ENCODE measurements at regions of chr2 and their contacts with region 1.

Region 1: DNA sequence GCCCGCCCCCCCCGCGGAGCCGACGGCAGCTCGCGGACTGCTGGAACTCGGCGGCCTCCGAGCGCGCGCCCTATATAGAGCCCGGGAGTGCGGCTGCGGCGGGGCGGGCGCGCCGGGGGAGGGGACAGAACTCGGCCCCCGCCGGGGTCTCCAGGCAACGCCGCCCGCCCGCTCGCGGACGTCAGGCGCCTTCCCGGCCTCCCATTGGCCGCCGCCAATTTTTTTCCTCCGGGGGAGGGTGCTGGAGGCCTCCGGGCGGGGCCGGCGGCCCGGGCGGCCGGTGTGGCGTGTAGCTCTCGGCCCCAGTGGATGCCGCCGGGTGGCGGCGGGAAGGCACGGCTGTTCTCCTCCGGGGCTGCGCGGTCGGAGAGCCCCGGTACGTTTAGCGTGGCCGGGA is at the start of gene ZFP36L2:
- DNase-seq: peak; percentile 98
- H3K4me3 ChIP-seq: peak within 1 kb of the TSS; percentile 73 to 96 (median 92)
- H3K27ac ChIP-seq: peak within 1 kb of the TSS; percentile 99 to 100 (median 100)
- H3K4me1 ChIP-seq: peaks cover 0 to 48% (median 36%) of the 10 kb centered on the region in 4 donors
- H3K27me3 ChIP-seq: no peaks in the 10 kb centered on the region
- CTCF ChIP-seq: no peak
- EP300 ChIP-seq: no peak
- POLR2A ChIP-seq: peak; percentile 97 to 98
- total RNA-seq, gene ZFP36L2: 59.8 to 115 (median 72.3) TPM

Region 2: GRCh38 chr2:42828487-42829425 is 397.8 kb before region 1 on chr2:
- intact Hi-C with region 1: loop called (anchors 2 kb)
- DNase-seq: peak; percentile 89
- H3K4me3 ChIP-seq: no peak overlapping the region
- H3K27ac ChIP-seq: peak overlapping the region in 2 of 4 donors; percentile 45 to 48
- H3K4me1 ChIP-seq: peaks cover 0 to 26% (median 22%) of the 10 kb centered on the region in 4 donors
- H3K27me3 ChIP-seq: no peaks in the 10 kb centered on the region
- CTCF ChIP-seq: peak; percentile 80 to 97 (median 94)
- EP300 ChIP-seq: no peak
- POLR2A ChIP-seq: no peak

Region 3: DNA sequence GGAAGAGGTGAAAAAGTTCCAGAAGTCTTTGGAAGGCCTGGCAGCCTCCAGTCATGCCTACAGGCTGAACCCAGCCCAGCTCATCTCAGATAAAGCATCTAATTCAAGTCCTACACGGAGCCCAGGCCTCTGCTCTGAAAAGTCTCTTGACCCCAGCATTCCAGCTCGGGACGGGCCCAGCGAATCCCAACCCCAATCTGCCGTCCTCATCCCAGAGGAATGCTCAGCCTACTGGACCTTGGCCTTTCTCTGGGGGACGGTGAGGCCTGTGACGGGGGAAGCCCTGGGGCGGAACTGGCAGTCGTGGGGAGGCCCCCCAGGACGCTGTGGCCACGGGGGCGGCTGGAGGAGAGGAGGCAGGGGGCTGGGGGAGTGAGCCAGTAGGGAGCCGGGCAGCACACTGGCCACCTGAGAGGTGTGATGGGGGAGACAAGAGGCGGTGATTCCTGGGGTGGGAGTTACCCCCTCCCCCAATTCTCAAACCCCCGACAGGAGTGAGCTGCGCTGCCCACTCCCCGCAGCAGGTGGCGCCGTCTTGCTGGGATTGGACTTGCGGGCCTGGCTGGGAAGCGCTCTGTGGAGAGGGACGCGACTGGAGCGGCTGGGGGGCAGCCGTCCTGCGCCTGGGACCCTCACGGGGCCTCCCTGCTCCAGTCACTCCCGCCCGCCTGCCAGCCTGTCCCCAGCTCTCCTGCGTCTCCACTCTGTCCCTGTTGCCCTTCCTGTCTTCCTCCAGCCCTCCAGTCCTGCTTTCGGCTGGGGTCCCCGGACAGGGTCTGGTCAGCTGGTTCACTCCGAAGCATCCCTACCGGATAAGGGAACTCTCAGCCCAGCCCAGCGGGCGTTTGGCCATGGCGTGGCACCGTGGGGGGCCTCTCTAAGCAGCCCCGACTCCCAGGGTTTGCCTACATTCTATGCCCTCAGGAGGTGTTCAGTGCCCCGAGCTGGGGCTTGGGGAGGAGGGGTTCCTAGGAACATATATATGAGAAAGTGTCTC is 251.5 kb before region 1 on chr2:
- intact Hi-C with region 1: loop called (anchors 1 kb)
- DNase-seq: peak; percentile 89
- H3K4me3 ChIP-seq: peak overlapping the region; percentile 9 to 49 (median 44)
- H3K27ac ChIP-seq: peak overlapping the region; percentile 26 to 71 (median 66)
- H3K4me1 ChIP-seq: peaks cover 0 to 28% (median 20%) of the 10 kb centered on the region in 4 donors
- H3K27me3 ChIP-seq: no peaks in the 10 kb centered on the region
- CTCF ChIP-seq: peak; percentile 94 to 97 (median 96)
- EP300 ChIP-seq: no peak
- POLR2A ChIP-seq: no peak

Region 4: DNA sequence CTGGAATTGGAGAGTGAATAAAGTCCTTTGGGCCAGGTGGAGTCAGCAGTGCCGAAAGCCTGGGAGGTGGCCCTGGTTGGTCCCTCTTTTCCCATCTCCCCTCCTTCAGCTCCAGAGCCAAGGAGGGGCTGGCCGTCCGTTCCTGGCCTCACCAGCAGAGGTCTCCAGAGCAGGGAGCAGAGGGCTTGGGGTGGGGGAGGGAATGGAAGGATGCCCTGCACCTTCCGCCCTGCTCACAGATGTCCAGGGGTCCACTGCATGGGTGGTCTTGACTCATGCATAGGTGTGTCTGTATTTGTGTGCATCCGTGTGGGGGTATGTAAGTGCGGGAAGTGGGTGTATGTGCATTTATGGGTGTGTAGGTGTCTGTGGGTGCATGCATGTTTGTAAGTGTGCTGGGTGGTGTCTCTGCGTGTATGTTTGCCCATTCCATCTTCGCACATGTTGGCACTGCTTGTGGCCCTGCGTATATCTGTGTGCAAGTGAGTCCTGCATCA is 202.0 kb before region 1 on chr2:
- intact Hi-C with region 1: loop called (anchors 2 kb)
- DNase-seq: peak; percentile 87
- H3K4me3 ChIP-seq: no peak overlapping the region
- H3K27ac ChIP-seq: peak overlapping the region in 2 of 4 donors; percentile 17 to 48
- H3K4me1 ChIP-seq: peaks cover 0 to 15% (median 11%) of the 10 kb centered on the region in 4 donors
- H3K27me3 ChIP-seq: no peaks in the 10 kb centered on the region
- CTCF ChIP-seq: peak; percentile 86 to 95 (median 90)
- EP300 ChIP-seq: no peak
- POLR2A ChIP-seq: no peak

Region 5: GRCh38 chr2:43343573-43344304 is 117.2 kb after region 1 on chr2:
- intact Hi-C with region 1: loop called (anchors 5 kb)
- DNase-seq: peak; percentile 94
- H3K4me3 ChIP-seq: no peak overlapping the region
- H3K27ac ChIP-seq: peak overlapping the region; percentile 85 to 92 (median 86)
- H3K4me1 ChIP-seq: peaks cover 0 to 90% (median 88%) of the 10 kb centered on the region in 4 donors
- H3K27me3 ChIP-seq: no peaks in the 10 kb centered on the region
- CTCF ChIP-seq: no peak
- EP300 ChIP-seq: peak in 1 of 4 donors; percentile 37
- POLR2A ChIP-seq: no peak

Region 6: GRCh38 chr2:43537137-43537536 is 310.6 kb after region 1 on chr2:
- intact Hi-C with region 1: loop called (anchors 5 kb)
- DNase-seq: no peak
- H3K4me3 ChIP-seq: no peak overlapping the region
- H3K27ac ChIP-seq: peak overlapping the region in 2 of 4 donors; percentile 42 to 62
- H3K4me1 ChIP-seq: peaks cover 0 to 40% (median 20%) of the 10 kb centered on the region in 4 donors
- H3K27me3 ChIP-seq: no peaks in the 10 kb centered on the region
- CTCF ChIP-seq: no peak
- EP300 ChIP-seq: no peak
- POLR2A ChIP-seq: no peak

Measured in sigmoid colon (tissue), 7 donors.